PC-9 (cell line): ENCODE measurements at regions of chr19 and their contacts with region 1.

Region 1: GRCh38 chr19:18160971-18161635 is 8.1 kb downstream of the PIK3R2 start:
- DNase-seq: peak in 1 of 2 experiments; percentile 79
- H3K4me3 ChIP-seq: no peak overlapping the region
- H3K27ac ChIP-seq: no peak overlapping the region
- H3K4me1 ChIP-seq: peaks cover 4% of the 10 kb centered on the region; the same call in 1 of the 2 replicates
- H3K27me3 ChIP-seq: no peaks in the 10 kb centered on the region
- CTCF ChIP-seq: peak; percentile 25; the same call in 1 of the 2 replicates

Region 2: DNA sequence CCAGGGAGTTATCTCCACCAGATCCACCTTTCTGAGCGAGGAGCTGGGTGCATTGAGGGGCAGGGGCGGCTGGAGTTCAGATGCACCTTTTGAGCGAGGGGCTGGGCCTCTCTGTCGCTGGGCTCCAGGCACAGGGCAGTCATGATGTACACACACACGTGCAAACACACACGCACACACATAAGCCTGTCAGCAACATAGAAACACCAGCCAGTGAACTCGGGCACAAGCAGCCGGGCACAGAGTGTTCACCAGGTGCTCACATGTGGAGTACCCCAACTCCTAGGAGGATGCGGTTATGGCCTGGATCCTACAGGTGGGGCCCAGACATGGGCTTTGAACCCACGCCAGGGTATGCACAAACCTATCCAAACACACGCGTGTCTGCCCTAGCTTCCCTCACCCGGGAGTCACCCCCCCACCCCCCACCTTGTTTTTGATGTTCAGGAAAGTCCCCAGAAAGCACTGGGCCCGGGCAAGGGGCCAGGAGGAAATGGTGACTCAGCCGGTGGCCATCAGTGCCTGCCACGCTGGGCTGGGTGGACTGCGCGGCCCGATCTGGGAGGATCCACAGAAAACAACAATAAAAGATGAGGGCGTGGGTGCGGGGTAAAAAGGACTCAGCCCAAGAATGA is 139.9 kb before region 1 on chr19:
- CTCF ChIA-PET with region 1: no interaction called
- POLR2A ChIA-PET with region 1: interaction called, 13 read pairs
- intact Hi-C with region 1: no loop called
- DNase-seq: peak; percentile 68 to 77
- H3K4me3 ChIP-seq: peak overlapping the region; percentile 56
- H3K27ac ChIP-seq: peak overlapping the region; percentile 83
- H3K4me1 ChIP-seq: peaks cover 19% of the 10 kb centered on the region
- H3K27me3 ChIP-seq: no peaks in the 10 kb centered on the region
- CTCF ChIP-seq: no peak

Region 3: GRCh38 chr19:18239303-18239702 is 78.2 kb after region 1 on chr19:
- CTCF ChIA-PET with region 1: no interaction called
- POLR2A ChIA-PET with region 1: interaction called, 14 read pairs
- intact Hi-C with region 1: no loop called
- DNase-seq: no peak
- H3K4me3 ChIP-seq: no peak overlapping the region
- H3K27ac ChIP-seq: no peak overlapping the region
- H3K4me1 ChIP-seq: no peaks in the 10 kb centered on the region
- H3K27me3 ChIP-seq: no peaks in the 10 kb centered on the region
- CTCF ChIP-seq: no peak